Caco-2 (cell line): ENCODE measurements at regions of chr3 and their contacts with region 1.

Region 1: DNA sequence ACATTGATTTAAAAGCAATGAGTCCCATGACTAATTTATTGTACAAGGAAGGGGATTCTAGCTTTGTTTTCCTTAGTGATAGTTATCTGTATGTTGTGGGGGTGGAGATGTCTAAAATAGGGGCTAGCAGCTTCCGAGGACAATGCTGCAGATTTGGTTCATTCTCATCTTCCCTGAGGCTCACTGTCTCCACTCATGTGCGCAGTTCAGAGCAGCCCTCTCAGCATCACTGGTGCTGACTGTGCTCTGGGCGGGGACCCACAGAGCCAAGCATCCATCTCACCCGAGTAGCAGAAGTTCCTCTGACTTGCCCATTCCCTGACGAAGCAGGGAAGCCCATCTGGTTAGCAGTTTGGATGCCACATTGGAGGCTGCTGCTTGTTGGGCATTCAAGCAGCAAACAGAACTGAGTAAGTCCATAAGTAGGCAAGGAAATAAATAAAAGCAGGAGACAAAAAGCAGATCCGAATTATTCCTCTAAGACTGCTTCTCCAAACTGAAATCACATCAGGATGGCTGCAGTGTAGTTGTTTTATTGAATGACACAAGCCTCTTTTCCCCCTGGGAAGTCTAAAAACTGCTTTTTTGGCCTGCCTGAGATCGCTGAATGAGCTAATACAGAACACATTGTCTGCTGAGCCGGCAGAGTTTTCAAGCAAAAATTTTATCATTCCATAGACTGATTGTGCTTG is 27.5 kb downstream of the RARB start:
- DNase-seq: no peak
- H3K4me3 ChIP-seq: no peak overlapping the region
- H3K4me3 Mint-ChIP-seq: peak overlapping the region; percentile 69
- H3K27ac Mint-ChIP-seq: peak overlapping the region; percentile 94
- H3K4me1 ChIP-seq: peaks cover 28% of the 10 kb centered on the region
- H3K4me1 Mint-ChIP-seq: peaks cover 43% of the 10 kb centered on the region
- H3K27me3 ChIP-seq: no peaks in the 10 kb centered on the region
- H3K27me3 Mint-ChIP-seq: no peaks in the 10 kb centered on the region
- CTCF ChIP-seq: no peak

Region 2: DNA sequence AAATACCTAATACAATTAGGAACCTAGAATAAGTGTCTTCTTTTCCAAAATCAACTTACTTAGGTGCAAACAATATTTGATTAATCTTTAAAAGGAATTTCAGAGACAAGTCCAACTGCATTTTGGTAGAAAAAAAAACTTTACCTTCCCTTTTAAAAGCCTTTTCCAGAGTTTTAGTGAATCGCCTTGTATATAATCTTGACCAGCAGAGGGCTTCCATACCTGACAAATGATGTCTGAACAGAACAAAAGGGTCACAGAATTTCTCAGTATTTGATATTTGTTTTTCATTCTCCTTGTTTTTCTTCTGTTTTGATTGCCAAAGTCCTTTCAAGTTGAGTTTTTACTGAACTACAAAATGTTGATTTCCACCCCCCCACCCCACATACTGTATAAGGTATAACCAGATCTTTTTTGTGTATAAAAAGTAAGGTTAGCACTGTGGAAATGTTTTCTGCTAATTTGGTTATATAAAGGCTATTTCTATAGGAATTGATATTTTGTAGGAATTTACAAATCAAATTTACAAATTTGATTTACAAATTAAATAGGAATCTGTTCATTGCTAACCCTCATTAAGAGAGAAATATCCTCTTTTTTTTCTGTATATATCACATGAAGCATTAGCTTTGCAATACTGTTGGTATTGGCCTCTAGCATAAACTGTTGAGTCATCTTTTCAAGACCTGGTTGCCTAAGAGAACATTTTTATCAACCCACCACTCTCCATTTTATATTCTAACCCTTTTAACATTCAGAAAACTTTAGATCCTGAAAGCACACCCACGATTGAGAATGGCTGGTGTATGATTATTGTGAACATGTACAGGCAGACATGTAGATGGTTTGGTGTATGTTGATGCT is 491.6 kb before region 1 on chr3:
- CTCF ChIA-PET with region 1: no interaction called
- POLR2A ChIA-PET with region 1: no interaction called
- intact Hi-C with region 1: loop called (anchors 10 kb)
- DNase-seq: peak in 1 of 2 experiments; percentile 35
- H3K4me3 ChIP-seq: no peak overlapping the region
- H3K4me3 Mint-ChIP-seq: no peak overlapping the region
- H3K27ac Mint-ChIP-seq: no peak overlapping the region
- H3K4me1 ChIP-seq: no peaks in the 10 kb centered on the region
- H3K4me1 Mint-ChIP-seq: peaks cover 10% of the 10 kb centered on the region
- H3K27me3 ChIP-seq: no peaks in the 10 kb centered on the region; the same call in 1 of the 2 replicates
- H3K27me3 Mint-ChIP-seq: no peaks in the 10 kb centered on the region
- CTCF ChIP-seq: peak; percentile 53 to 69

Region 3: DNA sequence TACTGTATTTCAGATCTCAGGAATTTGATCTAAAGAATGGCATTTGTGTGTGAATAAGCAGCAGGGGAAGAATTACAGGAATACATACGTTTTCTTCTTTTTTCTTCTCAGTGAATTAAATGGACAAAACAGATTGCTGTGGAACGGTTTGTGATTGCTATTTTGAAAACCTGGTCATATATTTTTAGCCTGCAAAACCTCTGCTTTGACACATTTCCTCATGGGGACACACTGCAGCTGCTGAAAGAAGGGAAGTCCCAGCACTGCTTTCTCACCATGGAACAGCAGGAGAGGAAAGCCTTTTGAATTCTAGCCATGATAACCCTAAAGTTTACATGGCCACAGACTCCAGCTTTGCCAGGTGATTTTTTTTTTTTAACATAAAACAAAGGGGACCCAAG is 649.3 kb after region 1 on chr3:
- CTCF ChIA-PET with region 1: no interaction called
- POLR2A ChIA-PET with region 1: no interaction called
- intact Hi-C with region 1: no loop called
- DNase-seq: no peak
- H3K4me3 ChIP-seq: no peak overlapping the region
- H3K4me3 Mint-ChIP-seq: no peak overlapping the region
- H3K27ac Mint-ChIP-seq: no peak overlapping the region
- H3K4me1 ChIP-seq: no peaks in the 10 kb centered on the region
- H3K4me1 Mint-ChIP-seq: no peaks in the 10 kb centered on the region
- H3K27me3 ChIP-seq: no peaks in the 10 kb centered on the region
- H3K27me3 Mint-ChIP-seq: no peaks in the 10 kb centered on the region
- CTCF ChIP-seq: no peak